Colonic mucosa (tissue), 4 donors: ENCODE measurements at regions of chr1 and their contacts with region 1.

Region 1: DNA sequence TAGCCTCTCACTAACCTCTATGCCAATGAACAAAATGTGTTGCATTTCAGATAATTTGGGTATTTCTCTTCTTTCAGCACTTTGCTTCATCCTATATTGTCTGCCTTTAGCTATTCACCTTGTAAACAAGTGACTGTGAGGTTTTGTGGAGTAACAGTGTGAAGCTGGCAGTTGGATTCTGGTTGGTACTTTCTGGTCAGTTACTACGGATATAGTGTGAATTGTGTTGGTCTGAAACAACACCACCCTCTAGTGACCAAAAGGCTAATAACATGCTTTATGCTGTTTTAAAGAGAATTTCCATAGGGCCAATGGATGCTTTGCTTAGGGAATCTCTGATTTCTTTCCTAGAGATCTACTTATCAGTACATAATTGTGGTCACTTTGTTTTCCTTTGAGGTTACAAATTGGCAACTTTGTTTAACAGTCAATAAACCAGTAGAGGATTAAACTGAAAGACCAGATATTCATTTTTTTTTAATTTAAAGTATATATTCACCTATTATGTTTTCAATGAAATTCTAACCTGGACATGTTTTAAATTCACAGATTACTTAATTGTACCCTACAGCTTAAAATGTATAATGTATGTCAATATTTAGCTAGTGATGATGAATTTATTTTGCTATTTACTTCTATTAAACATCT is 2.5 kb upstream of the PTGER3 start:
- DNase-seq: peak; percentile 27
- H3K4me3 ChIP-seq: no peak overlapping the region
- H3K27ac ChIP-seq: no peak overlapping the region
- H3K4me1 ChIP-seq: no peaks in the 10 kb centered on the region
- H3K27me3 ChIP-seq: peaks cover 19% of the 10 kb centered on the region
- CTCF ChIP-seq: peak; percentile 67

Region 2: GRCh38 chr1:70528590-70529333 is 521.3 kb before region 1 on chr1:
- intact Hi-C with region 1: loop called (anchors 2 kb)
- DNase-seq: no peak
- H3K4me3 ChIP-seq: no peak overlapping the region
- H3K27ac ChIP-seq: no peak overlapping the region
- H3K4me1 ChIP-seq: no peaks in the 10 kb centered on the region
- H3K27me3 ChIP-seq: no peaks in the 10 kb centered on the region
- CTCF ChIP-seq: peak; percentile 39

Region 3: DNA sequence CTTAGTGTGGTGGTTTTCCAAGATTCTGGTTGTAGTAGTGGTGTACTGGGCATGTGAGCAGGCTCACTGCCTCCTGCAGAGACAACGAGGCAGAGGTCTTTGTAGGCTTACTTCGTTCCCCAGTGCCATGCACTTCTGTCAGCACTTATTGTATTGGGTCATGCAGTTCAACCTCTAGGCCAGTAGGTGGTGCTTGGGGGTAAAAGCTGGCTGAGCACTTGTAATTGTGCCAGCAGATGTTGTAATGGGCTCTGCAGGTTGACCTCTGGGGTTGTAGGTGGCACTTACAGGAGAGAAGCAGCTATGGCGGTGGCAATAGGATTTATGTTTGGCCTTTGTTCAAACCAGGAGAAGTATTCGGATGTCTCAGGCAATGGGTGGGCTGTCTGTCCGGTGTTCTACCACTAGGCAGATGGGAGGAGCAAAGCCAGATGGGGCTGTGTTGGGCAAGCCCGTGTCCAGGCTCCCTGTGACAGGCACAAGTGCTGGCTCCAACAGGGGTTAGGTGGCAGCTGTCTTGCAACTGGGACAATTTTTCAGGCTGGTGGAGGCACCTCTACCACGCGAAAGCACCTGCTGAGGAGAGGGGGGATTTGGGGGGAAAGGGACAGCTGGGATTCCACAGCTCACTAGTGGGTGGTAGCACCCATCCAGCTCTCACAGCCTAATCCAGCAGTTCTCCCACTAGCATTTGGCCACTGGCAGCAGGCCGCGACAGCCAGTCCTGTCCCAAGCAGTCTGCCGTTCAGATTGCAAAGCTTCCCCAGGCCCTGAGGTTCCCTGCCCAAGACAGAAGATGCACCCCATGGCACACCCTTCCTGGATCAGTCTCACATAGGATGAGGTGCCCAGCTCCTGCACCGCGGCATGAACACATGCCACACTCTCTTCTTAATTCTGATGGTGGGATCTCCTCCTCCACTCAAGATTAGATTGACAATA is 364.5 kb before region 1 on chr1:
- intact Hi-C with region 1: loop called (anchors 2 kb)
- DNase-seq: peak; percentile 58
- H3K4me3 ChIP-seq: no peak overlapping the region
- H3K27ac ChIP-seq: no peak overlapping the region
- H3K4me1 ChIP-seq: no peaks in the 10 kb centered on the region
- H3K27me3 ChIP-seq: no peaks in the 10 kb centered on the region
- CTCF ChIP-seq: peak; percentile 91